Naive thymus-derived CD8-positive, alpha-beta T cell (primary cell): ENCODE measurements at regions of chr9 and their contacts with region 1.

Region 1: DNA sequence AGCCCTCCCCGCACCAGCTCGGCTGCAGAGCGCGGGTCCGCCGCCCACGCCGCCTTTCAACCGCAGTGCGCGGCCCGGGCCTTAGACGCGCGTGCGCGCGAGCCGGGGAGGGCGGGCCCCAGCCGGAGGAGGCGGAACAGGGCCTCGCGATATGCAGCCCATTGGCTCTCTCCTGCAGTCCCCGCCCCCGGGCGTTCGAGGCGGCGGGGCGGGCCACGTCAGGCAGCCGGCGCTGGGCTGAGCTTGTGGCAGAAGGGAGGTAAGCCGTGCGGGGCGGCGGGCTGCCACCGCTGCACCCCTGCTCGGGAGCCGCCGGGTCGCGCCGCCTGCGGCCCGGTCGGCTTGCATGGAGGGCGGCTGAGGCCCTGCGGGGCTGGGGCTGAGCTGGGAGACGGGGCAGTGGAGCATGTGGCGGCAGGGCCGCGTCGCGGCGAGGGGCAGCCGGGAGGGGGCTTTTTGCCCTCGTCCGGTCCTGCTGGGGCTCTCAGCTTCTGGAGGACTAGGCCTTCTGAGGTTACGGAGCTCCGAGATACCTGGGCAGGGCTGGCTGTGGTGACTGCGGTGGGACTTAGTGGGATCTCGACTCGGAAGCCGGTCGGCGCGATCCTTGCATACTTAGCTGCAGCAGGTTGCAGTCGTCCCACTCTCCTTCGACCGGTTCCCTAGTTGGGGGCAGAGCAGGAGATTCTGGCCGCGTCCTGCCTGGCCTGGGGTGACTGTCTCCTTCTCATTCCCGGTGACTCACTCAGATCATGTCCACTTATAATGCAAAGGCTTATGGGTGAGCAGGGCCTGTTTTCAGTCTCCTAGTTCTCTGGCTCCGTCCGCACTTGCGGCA is at the start of gene FOCAD:
- DNase-seq: peak; percentile 91 to 97 (median 96)
- ATAC-seq: peak; percentile 97 to 98
- H3K4me3 Mint-ChIP-seq: peak within 1 kb of the TSS; percentile 83 to 97 (median 92)
- H3K27ac Mint-ChIP-seq: peak within 1 kb of the TSS; percentile 53 to 94 (median 90)
- H3K4me1 Mint-ChIP-seq: peaks cover 14 to 27% (median 19%) of the 10 kb centered on the region in 4 donors
- H3K27me3 Mint-ChIP-seq: no peaks in the 10 kb centered on the region
- polyA plus RNA-seq, gene FOCAD: 12.5 to 15.3 (median 14.9) TPM

Region 2: GRCh38 chr9:20670395-20670794 is 13.9 kb before region 1 on chr9:
- POLR2A ChIA-PET with region 1: interaction called, 10 read pairs
- DNase-seq: no peak
- ATAC-seq: no peak
- H3K4me3 Mint-ChIP-seq: no peak overlapping the region
- H3K27ac Mint-ChIP-seq: peak overlapping the region in 1 of 10 donors; percentile 22
- H3K4me1 Mint-ChIP-seq: no peaks in the 10 kb centered on the region
- H3K27me3 Mint-ChIP-seq: peaks cover 0 to 4% (median 0%) of the 10 kb centered on the region in 5 donors